Esophagus squamous epithelium (tissue), 5 donors: ENCODE measurements at regions of chr3 and their contacts with region 1.

Region 1: DNA sequence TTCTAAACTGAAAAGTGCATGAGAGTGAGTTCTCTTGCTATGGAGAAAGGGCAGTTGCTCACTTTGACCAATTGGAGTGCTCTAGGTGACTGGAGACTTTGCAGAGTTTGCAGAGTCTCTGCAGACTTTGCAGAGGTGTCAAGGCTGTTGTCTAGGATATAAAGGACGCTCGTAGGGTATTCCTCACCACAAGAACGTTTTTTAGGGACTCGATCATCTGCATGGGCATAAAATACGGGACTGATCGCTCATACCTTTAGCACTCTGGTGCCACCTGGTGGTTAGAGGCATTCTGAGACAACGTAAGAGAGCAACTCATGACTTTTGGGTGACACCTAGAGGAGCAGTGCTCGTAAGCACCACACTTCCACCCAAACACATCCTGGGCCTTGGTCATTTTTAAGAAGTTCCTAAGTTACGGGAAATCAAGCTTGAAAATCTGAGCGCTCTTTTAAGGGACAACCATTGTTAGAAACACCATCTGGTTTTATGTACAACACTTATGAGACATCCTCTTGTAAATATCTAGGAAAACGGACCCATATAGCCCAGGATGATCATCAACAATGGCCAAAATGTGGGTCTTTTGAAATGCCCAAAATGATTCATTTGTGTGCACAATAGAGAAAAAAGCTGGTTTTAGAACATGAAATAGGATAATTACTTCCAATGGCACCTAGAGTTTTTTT is 51.6 kb upstream of the XCR1 start:
- DNase-seq: peak; percentile 35
- H3K4me3 ChIP-seq: no peak overlapping the region
- H3K27ac ChIP-seq: no peak overlapping the region
- H3K4me1 ChIP-seq: peaks cover 0 to 40% (median 4%) of the 10 kb centered on the region in 3 donors
- H3K27me3 ChIP-seq: no peaks in the 10 kb centered on the region
- CTCF ChIP-seq: peak; percentile 92 to 98 (median 97)
- POLR2A ChIP-seq: no peak

Region 2: GRCh38 chr3:45938864-45939263 is 140.0 kb before region 1 on chr3:
- intact Hi-C with region 1: loop called (anchors 2 kb)
- DNase-seq: peak; percentile 29
- H3K4me3 ChIP-seq: no peak overlapping the region
- H3K27ac ChIP-seq: no peak overlapping the region
- H3K4me1 ChIP-seq: peaks cover 0 to 27% (median 5%) of the 10 kb centered on the region in 3 donors
- H3K27me3 ChIP-seq: no peaks in the 10 kb centered on the region
- CTCF ChIP-seq: peak; percentile 83 to 92 (median 86)
- POLR2A ChIP-seq: no peak

Region 3: DNA sequence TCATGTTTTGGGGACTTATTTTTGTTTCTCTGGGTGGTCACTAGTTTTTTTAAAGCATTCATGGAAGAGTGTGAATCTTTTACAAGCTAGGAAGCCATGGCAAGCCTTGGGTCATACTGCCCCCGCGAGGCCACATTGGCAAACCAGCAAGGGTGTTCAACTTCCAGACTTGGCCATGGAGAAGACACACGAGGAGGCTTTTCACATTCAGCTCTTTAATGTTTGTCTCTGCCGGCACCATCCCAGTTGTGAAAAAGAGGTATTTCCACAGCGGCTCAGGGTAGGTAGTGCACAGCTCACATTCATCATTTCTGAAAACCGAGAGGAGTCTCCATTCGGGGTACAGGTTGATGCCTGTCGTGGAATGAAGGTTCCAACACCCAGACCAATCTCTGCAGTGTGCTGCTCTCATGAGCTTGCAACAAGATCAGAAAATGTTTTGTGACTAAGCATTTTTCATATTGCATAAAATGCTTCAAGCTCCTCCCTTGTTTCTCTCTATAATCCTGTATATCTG is 299.6 kb after region 1 on chr3:
- intact Hi-C with region 1: loop called (anchors 5 kb)
- DNase-seq: no peak
- H3K4me3 ChIP-seq: no peak overlapping the region
- H3K27ac ChIP-seq: no peak overlapping the region
- H3K4me1 ChIP-seq: peaks cover 2 to 38% (median 7%) of the 10 kb centered on the region in 3 donors
- H3K27me3 ChIP-seq: peaks cover 0 to 16% (median 0%) of the 10 kb centered on the region in 4 donors
- CTCF ChIP-seq: peak in 5 of 6 experiments; percentile 47 to 76 (median 59)
- POLR2A ChIP-seq: no peak